Activated T-helper 1 cell treated with anti-CD3 and anti-CD28 coated beads, Interleukin-12 subunit alpha, Interleukin-12 subunit beta, Interleukin-2, Interleukin-4 antibody, amounts not matched to agents 30 ng/mL and 10 ng/mL and 1 ng/mL, durations not matched to agents 14 hours and 24 hours and 36 hours (primary cell): ENCODE measurements at regions of chr1 and their contacts with region 1.

Region 1: DNA sequence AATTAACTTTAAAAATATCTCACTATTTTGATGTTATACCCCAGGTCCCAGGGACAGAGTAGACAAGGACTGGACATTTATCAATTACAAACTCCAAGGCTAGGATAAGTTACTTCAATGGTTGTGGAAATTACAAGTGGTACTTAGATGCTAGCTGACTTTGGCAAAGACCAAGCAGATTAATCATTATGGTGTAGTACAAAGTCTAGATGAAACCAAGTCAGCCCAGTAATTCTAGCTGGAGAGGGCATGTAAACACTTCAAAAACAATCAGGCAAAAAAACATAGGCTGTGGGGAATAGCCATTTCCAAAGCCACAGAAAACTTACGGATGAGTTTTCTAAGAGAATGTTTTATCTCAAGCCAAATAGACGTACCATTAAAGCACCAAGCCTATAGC is 124.5 kb downstream of the TSEN15 start:
- DNase-seq: no peak
- H3K4me3 Mint-ChIP-seq: no peak overlapping the region
- H3K27ac Mint-ChIP-seq: no peak overlapping the region
- H3K4me1 Mint-ChIP-seq: no peaks in the 10 kb centered on the region
- H3K27me3 Mint-ChIP-seq: peaks cover 7% of the 10 kb centered on the region

Region 2: GRCh38 chr1:183548116-183548515 is 627.9 kb before region 1 on chr1:
- intact Hi-C with region 1: no loop called
- DNase-seq: no peak
- H3K4me3 Mint-ChIP-seq: no peak overlapping the region
- H3K27ac Mint-ChIP-seq: no peak overlapping the region
- H3K4me1 Mint-ChIP-seq: peaks cover 21% of the 10 kb centered on the region
- H3K27me3 Mint-ChIP-seq: no peaks in the 10 kb centered on the region

Region 3: DNA sequence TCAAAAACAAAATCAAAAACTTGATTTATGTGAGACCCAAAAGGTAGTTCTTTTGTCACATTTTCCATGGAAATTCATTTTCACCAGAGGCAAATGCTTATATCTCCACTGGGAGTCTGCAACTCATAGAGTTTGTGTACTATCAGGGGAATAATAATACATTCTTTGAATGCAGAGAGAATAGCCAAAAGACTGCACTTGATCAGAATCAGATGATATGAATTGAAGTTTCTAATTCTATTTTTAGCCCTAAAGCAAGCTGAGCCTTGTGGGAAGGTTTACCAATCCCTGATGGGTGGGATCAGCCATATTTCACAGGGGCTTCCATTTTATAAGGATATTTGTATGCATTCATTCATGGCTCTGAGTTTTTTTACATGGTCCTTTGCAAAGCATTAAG is 74.9 kb before region 1 on chr1:
- intact Hi-C with region 1: loop called (anchors 2 kb)
- DNase-seq: no peak
- H3K4me3 Mint-ChIP-seq: no peak overlapping the region
- H3K27ac Mint-ChIP-seq: no peak overlapping the region
- H3K4me1 Mint-ChIP-seq: no peaks in the 10 kb centered on the region
- H3K27me3 Mint-ChIP-seq: peaks cover 2% of the 10 kb centered on the region